Ascending aorta (tissue), 2 donors: ENCODE measurements at regions of chrX and their contacts with region 1.

Region 1: DNA sequence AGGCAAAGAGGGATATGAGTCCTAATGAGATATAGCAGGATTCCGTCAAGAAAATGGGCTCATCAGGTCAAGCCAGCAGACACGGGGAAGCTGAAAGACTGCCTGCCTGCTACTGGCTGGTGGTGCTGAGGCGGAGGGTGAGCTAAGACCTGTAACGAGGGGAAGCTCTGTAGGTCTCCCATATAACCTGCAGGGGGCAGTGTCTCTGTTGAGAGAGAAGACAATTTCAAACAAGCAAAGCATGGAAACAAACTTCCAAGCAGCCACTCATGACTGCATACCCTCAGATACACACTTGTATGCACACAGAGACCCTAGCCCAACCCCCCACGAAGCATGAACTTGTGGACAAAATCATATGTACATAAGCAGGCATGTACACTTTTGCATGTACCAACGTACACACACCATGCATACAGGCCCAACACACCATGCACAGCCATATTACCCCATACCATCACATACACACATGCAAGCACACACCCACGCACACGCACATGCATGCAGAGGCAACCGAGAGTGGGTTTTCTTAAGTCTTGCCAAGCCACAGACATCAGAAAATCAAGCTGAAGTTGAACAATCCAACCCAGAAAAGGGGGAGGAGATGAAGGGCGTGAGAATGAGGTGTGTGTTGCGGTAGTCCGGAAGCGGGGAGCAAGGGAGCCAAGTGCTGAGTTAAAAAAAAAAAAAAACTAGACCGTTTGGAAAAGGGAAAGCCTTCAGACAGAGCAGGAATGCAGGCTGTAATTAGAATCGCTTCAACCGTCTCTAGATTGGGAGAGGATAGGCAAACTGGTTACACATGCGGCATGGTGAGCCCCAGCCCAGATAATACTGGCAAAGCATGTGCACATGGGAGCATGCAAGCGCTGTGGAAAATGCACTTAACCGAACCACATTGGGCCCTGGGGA is 71.0 kb downstream of the PJA1 start:
- DNase-seq: peak in 1 of 2 donors; percentile 68
- H3K4me3 ChIP-seq: no peak overlapping the region
- H3K27ac ChIP-seq: no peak overlapping the region
- H3K4me1 ChIP-seq: no peaks in the 10 kb centered on the region
- H3K27me3 ChIP-seq: no peaks in the 10 kb centered on the region
- CTCF ChIP-seq: peak; percentile 14 to 52 (median 36)

Region 2: GRCh38 chrX:68978258-68979054 is 115.8 kb before region 1 on chrX:
- intact Hi-C with region 1: no loop called
- DNase-seq: peak in 1 of 2 donors; percentile 62
- H3K4me3 ChIP-seq: no peak overlapping the region
- H3K27ac ChIP-seq: peak overlapping the region; percentile 14 to 35
- H3K4me1 ChIP-seq: peaks cover 0 to 1% of the 10 kb centered on the region in 2 donors
- H3K27me3 ChIP-seq: no peaks in the 10 kb centered on the region
- CTCF ChIP-seq: no peak

Region 3: GRCh38 chrX:69222103-69223090 is 128.2 kb after region 1 on chrX:
- intact Hi-C with region 1: loop called (anchors 1 kb)
- DNase-seq: peak in 1 of 2 donors; percentile 68
- H3K4me3 ChIP-seq: no peak overlapping the region
- H3K27ac ChIP-seq: no peak overlapping the region
- H3K4me1 ChIP-seq: no peaks in the 10 kb centered on the region
- H3K27me3 ChIP-seq: no peaks in the 10 kb centered on the region
- CTCF ChIP-seq: peak; percentile 66 to 73 (median 67)

Region 4: GRCh38 chrX:69262036-69262936 is 168.1 kb after region 1 on chrX:
- intact Hi-C with region 1: no loop called
- DNase-seq: no peak
- H3K4me3 ChIP-seq: no peak overlapping the region
- H3K27ac ChIP-seq: no peak overlapping the region
- H3K4me1 ChIP-seq: no peaks in the 10 kb centered on the region
- H3K27me3 ChIP-seq: no peaks in the 10 kb centered on the region
- CTCF ChIP-seq: no peak

Region 5: DNA sequence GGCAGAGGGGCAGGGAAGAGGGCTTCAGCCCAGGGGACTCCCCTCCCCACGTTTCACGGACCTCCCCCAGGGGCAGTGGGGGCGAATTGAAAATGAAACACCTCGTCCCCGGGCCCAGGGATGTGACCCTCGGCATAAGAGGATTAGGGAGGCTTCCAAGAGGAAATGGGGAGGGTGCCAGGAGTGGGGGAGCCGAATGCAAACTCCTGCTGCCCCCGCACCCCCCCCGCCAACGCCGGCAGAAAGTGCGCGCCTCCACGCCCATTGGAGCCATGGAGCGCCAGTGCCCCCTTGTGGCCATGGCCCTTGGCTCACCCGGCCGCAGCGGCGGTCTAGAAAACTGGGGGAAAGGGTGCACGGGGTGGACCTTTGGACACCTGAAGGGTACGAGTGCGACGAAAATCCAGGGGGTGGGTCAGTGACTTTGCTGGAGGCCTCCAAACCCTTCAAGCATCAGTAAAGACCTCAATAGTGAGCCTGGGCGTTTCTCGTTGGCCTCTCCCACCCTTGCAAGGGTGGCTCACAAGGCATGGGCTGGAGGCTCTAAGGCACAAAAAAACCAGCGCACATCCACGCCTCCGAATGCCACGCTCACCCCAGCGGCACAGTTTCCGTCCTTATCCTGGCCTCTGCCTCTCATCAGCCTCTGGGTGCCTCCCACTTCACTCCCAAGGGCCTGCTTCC is 191.8 kb after region 1 on chrX:
- intact Hi-C with region 1: loop called (anchors 5 kb)
- DNase-seq: peak in 1 of 2 donors; percentile 71
- H3K4me3 ChIP-seq: peak overlapping the region; percentile 53 to 61
- H3K27ac ChIP-seq: peak overlapping the region in 1 of 2 donors; percentile 38
- H3K4me1 ChIP-seq: peaks cover 0 to 3% of the 10 kb centered on the region in 2 donors
- H3K27me3 ChIP-seq: no peaks in the 10 kb centered on the region
- CTCF ChIP-seq: peak; percentile 68 to 94 (median 88)

Region 6: GRCh38 chrX:69374569-69374968 is 280.4 kb after region 1 on chrX:
- intact Hi-C with region 1: no loop called
- DNase-seq: no peak
- H3K4me3 ChIP-seq: no peak overlapping the region
- H3K27ac ChIP-seq: no peak overlapping the region
- H3K4me1 ChIP-seq: no peaks in the 10 kb centered on the region
- H3K27me3 ChIP-seq: no peaks in the 10 kb centered on the region
- CTCF ChIP-seq: no peak